PC-3 (cell line): ENCODE measurements at regions of chr9 and their contacts with region 1.

Region 1: DNA sequence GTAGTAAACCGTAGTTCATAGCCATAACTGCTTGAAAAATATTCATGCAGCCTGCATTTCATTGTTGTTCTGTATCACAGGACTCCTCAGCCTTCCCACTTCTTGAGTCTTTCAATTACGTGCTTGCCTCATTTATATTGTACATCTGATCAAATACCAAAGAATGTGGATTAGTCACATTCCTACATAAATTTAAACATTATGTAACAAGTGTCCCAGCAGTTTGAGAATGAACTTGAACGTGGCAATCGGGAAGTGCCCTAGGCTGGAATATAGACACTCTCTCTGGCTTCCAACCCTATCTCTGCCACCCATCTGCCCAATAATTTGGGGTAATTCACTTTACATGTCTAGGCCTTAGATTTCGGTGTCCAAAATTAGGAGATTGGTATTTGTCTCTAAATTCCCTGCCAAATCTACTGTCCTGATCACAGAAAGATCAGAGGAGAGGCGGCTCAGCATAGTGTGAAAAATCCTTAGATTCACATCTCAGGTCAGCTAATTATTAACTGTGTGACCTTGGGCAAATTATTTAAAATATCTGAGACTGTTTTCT is 215.0 kb upstream of the RFX3 start:
- DNase-seq: peak; percentile 79
- ATAC-seq: peak; percentile 84
- H3K4me3 ChIP-seq: peak overlapping the region; percentile 24
- H3K27ac ChIP-seq: peak overlapping the region; percentile 80
- H3K4me1 ChIP-seq: peaks cover 35% of the 10 kb centered on the region
- H3K27me3 ChIP-seq: no peaks in the 10 kb centered on the region
- CTCF ChIP-seq: no peak

Region 2: DNA sequence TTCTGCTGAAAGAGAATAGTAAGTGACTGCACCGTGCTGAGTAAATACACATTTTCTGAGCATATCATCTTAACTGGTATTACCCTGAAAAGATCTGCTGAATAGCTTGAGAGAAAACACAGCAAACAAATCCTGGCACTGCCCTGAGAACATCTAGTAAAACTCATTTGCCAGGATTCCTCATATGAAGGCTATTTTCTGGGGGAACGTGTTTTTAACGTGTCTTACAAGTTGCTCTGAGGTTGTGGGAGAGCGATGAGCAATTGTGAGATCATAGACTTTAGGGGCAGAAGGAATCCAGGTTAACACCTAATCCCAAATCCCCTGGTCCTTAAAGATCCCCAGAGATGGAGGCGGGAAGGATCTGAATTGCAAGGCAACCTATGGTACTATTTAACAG is 116.9 kb after region 1 on chr9:
- CTCF ChIA-PET with region 1: no interaction called
- POLR2A ChIA-PET with region 1: no interaction called
- intact Hi-C with region 1: loop called (anchors 5 kb)
- DNase-seq: peak; percentile 92
- ATAC-seq: peak; percentile 66
- H3K4me3 ChIP-seq: no peak overlapping the region
- H3K27ac ChIP-seq: peak overlapping the region; percentile 98
- H3K4me1 ChIP-seq: peaks cover 46% of the 10 kb centered on the region
- H3K27me3 ChIP-seq: no peaks in the 10 kb centered on the region
- CTCF ChIP-seq: no peak